Aorta (tissue), 5 donors: ENCODE measurements at regions of chr1 and their contacts with region 1.

Region 1: DNA sequence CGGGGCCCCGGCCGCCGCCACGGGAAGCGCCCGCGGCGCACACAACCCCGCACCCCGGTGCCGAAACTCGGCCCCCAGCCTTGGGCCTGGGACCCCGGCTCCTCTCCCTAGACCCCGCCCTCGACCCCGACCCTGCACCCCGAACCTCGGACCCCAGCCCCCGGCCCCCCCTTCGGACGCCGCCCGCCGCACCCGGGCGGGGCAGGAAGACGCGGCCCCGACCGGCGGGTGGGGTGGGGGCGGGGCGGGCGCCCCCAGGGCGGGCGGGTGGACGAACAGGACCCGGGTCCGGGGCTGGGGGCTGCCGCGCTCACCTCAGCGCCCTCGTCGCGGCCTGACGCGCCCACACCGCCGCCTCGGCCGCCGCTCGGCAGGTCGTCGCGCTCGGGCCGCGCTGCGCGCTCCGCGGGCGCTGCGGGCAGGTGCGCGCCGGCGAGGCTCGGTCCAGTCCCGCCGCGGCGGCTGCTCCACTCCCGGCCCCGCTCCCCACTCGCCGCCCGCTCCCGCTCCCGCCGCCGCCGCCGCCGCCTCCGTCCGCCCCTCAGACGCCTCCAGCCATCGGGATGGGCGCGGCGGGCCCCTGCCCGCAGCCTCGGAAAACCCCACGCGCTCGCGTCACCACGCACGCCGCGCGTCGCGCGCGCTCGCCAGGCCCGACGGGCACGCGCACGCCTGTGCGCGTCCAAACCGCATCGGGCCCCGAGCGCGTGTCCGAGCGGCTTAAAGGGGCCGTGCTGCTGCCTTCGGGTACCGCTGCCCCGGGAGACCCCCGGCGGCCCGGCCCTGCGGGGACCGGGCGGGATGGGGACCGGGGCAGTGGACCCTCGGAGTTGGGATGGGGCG is at the start of gene GNB1:
- DNase-seq: peak; percentile 91 to 96
- ATAC-seq: peak; percentile 89
- H3K4me3 ChIP-seq: peak within 1 kb of the TSS; percentile 97 to 99
- H3K27ac ChIP-seq: peak within 1 kb of the TSS; percentile 85 to 95
- H3K4me1 ChIP-seq: no peaks in the 10 kb centered on the region
- H3K27me3 ChIP-seq: no peaks in the 10 kb centered on the region
- total RNA-seq, gene GNB1: 299 to 312 TPM

Region 2: DNA sequence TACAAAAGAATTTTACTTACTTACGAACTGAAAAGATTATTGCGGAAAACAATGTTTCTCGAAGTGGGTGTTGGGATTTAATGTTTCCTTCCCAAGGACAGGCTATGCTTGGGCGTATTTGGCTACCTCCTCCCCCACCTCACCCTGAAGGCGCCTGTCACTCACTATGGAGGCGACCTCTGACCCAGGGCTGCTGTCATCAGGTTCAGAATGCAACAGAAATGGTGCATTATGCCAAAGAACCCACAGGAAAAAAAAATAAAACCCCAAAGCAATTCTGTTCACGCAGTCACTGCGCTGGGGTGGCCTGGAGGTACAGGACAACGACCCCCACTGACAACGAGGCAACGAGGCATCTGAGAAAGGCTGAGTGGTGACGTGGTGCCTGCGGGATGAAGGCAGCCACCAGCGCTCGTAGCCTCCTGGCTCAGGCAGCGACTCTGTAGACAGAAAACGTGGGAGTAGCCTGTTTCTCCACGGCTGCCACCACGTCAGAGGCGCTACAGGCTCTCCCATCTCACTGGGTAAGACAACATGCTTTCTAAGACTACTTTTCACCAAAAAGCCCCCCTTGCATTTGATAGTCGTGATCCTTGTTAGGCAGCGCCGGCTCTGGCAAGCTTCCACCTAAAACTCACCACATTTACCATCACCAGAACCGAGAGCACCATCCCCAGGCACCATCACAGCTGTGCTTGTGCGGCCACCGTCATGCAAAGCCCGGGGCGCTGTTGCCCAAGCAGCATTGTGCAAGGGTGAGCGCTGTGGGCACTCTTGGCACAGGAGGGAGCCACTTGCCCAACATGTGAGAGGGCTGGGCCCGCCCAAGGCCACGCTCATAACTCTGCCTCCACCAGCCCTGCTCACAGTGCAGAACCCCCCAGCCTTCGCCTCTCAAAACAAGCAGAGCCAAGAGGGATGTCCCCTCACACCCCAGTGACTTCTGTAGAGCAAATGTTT is 126.8 kb before region 1 on chr1:
- intact Hi-C with region 1: no loop called
- DNase-seq: peak; percentile 80 to 82
- ATAC-seq: peak; percentile 54
- H3K4me3 ChIP-seq: no peak overlapping the region
- H3K27ac ChIP-seq: no peak overlapping the region
- H3K4me1 ChIP-seq: no peaks in the 10 kb centered on the region
- H3K27me3 ChIP-seq: no peaks in the 10 kb centered on the region

Region 3: DNA sequence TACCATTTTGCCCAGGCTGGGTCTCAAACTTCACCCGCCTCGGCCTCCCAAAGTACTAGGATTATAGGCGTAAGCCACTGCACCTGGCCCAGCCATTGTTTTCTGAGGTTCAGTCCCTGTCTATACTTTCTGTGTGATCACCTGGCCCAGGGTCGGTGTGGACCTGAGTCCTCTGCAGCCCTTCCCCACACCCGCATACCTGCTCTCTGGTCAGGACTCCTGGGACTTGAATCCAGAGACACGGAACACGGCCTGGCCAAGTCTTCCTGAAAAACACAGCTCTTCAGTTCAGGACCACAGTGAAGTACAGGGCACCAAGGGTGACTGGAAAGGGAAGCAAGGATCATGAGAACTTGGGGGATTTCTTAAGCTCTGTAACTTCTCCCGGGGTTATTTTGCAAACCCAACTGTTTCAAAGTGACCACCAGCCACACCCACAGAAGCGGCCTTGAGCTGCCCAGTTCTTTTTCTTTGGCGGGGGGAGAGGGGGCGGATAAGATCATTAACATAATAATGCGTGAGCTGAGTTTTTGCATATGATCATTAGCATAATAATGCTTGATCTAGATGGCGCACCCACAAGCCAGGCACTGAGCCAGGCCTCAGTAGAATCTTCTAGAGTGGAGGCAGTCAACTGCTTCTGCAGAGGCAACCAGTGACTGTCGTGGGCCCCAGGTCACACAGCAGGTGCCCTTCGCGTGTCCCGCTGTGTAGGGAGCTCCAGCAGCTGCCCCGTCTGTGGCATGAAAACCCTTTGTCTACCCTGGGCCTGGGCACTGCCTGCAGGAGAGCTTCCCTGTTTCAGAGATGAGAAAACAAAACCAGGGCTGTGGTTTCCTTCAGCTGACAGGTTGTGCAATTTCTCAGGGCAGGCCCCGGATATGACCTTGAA is 110.8 kb before region 1 on chr1:
- intact Hi-C with region 1: loop called in 1 of 2 experiments (anchors 5 kb)
- DNase-seq: peak; percentile 77 to 80
- ATAC-seq: peak; percentile 2
- H3K4me3 ChIP-seq: no peak overlapping the region
- H3K27ac ChIP-seq: no peak overlapping the region
- H3K4me1 ChIP-seq: peaks cover 0 to 3% of the 10 kb centered on the region in 2 donors
- H3K27me3 ChIP-seq: no peaks in the 10 kb centered on the region

Region 4: DNA sequence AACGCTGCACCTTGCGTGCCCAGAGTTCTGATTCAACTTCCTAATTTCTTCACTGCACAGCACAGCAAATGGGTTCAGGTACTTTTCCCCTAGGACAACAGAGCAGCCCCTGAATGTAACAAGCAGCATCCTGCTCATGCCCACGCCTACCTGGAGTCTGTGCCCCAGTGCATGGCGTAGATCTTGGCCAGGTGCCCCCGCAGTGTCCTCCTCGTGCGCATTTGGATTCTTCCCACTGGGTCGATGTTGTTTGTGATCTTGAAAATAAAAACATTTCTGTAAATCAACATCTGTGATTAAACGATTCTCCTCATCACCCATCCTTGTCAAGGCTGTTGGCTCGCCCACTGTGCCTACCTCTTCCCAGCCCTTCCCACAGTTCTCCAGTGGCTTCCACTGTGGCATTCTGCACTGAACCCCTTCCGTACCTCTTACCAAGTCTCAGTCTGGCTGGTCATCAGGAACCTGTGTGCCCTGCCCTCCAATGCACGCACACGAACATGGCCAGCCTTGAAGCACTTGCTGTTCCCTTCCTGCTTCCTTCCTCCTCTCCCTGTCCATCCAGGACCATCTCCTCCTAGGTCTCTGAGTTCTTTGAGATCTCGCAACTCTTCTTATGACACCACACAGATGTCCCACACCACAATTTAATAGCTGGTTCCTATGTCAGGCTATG is 75.0 kb before region 1 on chr1:
- intact Hi-C with region 1: loop called in 1 of 2 experiments (anchors 10 kb)
- DNase-seq: peak in 1 of 2 donors; percentile 67
- ATAC-seq: no peak
- H3K4me3 ChIP-seq: no peak overlapping the region
- H3K27ac ChIP-seq: no peak overlapping the region
- H3K4me1 ChIP-seq: no peaks in the 10 kb centered on the region
- H3K27me3 ChIP-seq: no peaks in the 10 kb centered on the region